ENCODE measurements at regions of chr11 and their contacts with region 1.

Region 1: DNA sequence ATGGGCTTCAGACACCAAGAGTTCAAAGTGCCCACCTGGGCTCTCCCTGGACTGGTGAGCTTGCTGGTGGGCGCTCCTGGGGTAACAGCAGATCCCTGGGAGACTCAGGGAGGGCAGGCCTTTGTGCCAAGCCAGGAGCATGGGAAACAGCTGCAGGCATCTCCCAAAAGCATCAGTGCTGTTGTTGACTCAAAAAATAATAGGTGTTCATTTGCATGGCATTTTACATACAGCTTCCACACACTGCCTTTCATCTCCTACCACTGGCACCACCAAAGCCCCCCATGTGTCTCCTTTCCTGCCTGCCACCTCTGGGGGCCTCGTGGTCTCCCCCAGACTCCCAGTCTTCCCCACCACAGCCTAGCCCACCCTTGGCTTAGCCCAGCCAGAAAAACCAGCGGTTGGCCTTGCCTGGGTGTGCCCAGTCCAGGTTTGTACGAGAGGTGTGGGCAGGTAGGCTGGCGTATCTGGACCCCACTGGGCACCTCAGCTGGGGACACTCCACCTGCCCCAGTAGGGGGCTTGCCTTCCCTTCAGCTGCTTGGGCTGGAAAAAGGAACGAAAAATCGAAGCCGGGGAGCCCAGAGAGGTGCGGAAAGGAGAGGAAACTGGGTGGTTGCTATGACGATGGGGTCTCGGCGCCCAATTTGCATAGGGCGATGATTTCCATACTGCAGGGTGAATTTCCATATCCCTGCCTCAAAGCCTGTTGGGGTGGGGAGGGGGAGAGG is 15.0 kb downstream of the POU2F3 start:
- DNase-seq: peak; percentile 73 to 75
- H3K4me3 ChIP-seq: peak overlapping the region in 3 of 4 experiments; percentile 29 to 50 (median 42); a peak in 6 of 8 replicates
- H3K27ac ChIP-seq: no peak overlapping the region
- H3K4me1 ChIP-seq: peaks cover 9 to 24% (median 14%) of the 10 kb centered on the region in 4 experiments
- H3K27me3 ChIP-seq: peaks cover 0 to 7% (median 3%) of the 10 kb centered on the region in 4 experiments; a peak in 4 of 7 replicates
- CTCF ChIP-seq: no peak
- EP300 ChIP-seq: no peak
- POLR2A ChIP-seq: no peak
- RAD21 ChIP-seq: no peak

Region 2: DNA sequence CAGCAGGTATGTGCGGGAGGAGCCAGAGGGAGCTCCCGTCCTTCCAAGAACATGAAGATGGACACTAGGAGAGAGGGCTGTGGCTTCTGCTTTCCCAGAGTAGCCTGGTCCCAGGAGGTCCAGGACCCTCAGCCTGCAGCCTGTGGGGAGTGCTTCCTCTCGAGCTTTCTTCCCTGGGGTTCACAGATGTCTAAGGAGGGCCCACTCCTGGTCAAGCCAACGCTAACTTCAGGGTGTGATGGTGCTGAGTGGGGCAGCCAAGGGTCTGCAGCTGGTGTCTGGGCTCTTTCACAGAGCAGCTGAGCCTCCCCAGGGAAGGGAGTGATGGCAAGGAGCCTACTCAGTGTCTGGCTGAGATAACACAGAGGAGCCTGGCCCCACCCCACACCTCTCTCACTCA is 11.7 kb before region 1 on chr11:
- CTCF ChIA-PET with region 1: interaction called, 102 read pairs
- POLR2A ChIA-PET with region 1: interaction called, 4 read pairs
- DNase-seq: no peak
- H3K4me3 ChIP-seq: no peak overlapping the region
- H3K27ac ChIP-seq: no peak overlapping the region
- H3K4me1 ChIP-seq: peaks cover 2 to 16% (median 4%) of the 10 kb centered on the region in 4 experiments
- H3K27me3 ChIP-seq: peaks cover 3 to 31% (median 25%) of the 10 kb centered on the region in 4 experiments
- CTCF ChIP-seq: no peak
- EP300 ChIP-seq: no peak
- POLR2A ChIP-seq: no peak
- RAD21 ChIP-seq: no peak; a peak in 1 of 4 replicates

Measured in H1 (cell line).